ENCODE measurements at regions of chr2 and their contacts with region 1.

Region 1: GRCh38 chr2:54522624-54523281 is 66.6 kb downstream of the SPTBN1 start:
- DNase-seq: peak in 1 of 2 donors; percentile 26
- ATAC-seq: peak; percentile 63 to 67
- H3K4me3 ChIP-seq: no peak overlapping the region
- H3K27ac ChIP-seq: peak overlapping the region in 2 of 4 donors; percentile 67 to 73
- H3K4me1 ChIP-seq: peaks cover 20 to 63% of the 10 kb centered on the region in 2 donors
- H3K27me3 ChIP-seq: no peaks in the 10 kb centered on the region
- CTCF ChIP-seq: peak; percentile 48 to 63 (median 55)
- POLR2A ChIP-seq: no peak

Region 2: DNA sequence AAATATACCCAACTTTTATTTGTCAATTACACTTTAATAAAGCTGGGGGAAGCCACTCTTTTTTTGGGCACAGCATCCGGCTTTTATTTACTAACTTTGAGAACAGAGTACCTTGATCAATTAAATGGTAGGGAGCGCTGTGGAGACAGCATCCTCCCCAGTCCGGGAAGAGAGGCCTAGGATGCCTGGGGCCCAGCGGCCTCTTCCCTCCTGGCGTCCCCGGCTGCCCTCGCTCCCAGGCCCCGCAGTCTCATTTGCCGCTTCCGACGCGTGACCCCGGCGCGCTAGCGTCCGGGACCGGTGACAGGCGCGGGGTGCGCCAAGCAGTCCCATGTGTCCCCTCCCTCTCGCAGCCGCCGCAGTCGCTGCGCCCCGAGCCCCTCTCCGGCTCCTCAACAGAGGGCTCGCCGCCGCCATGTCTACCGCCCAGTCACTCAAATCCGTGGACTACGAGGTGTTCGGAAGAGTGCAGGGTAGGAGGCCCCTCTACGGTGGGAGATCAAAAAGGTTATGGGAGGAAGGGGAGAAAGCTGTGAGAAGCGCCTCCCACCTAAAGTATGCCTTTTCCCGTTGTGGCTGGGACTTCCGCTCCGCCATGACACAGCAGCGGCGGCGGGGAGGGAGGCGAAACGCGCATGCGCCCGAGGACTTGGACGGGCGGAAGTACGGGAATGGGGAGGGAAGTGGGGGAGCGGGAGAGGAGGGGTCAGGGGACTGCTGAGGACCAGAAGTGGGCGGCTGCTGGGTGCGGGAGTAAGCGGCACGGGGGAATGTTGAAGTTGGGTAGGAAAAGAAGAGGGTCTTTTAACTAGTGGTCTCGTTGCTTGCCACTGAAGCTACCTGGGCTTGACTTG is 407.2 kb before region 1 on chr2 and contains the start of gene ACYP2:
- in situ Hi-C with region 1: loop called in 1 of 4 experiments (anchors 25 kb)
- intact Hi-C with region 1: no loop called
- DNase-seq: peak; percentile 94 to 95
- ATAC-seq: peak; percentile 96 to 98
- H3K4me3 ChIP-seq: peak within 1 kb of the TSS; percentile 70 to 89 (median 76)
- H3K27ac ChIP-seq: peak within 1 kb of the TSS; percentile 97 to 99 (median 98)
- H3K4me1 ChIP-seq: peaks cover 10 to 16% of the 10 kb centered on the region in 2 donors
- H3K27me3 ChIP-seq: no peaks in the 10 kb centered on the region
- CTCF ChIP-seq: no peak
- POLR2A ChIP-seq: peak; percentile 83 to 85
- total RNA-seq, gene ACYP2: 52.9 to 121 (median 107) TPM

Region 3: DNA sequence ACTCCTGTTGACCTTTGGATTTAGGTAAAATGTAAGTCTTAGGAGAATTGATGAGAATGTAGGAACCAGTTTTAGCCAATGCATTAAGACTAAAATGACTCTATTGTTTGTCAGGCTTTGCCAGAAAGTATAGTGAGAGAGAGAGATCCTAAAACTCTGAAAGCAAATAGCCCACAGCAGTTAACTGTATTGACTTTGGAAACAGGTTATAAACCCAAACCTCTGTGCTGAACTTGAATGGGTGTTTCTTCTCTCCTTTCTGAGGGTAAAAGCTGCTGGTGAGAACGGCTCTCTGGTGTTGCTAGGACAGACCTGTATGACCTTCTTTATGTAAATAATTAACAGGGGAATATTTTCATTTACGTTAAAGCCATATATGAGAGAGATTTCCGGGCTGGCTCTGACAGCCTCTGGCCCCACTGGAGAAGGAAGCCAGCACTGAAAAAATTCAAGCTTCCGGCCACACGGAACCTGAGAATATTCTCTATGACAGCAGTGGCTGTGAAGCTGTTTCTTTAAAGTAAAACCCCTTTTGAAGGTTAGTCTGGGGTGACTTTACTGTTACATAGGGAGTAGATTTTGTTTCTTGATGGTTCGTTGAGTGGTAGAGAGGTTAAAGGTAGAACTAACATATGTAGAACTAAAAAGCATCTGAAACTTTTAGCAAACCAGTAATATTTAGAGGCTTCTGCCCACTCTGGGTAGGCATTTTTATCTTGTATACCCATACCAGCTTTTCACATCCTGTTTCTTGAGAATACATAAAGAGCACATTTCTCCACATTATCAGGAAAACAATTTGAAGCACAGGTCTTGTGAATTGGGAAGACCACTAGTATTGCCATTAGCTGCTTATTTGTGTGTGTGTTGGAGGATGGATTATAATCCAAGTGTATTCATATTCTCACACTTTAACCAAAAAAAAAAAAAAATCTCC is 57.2 kb after region 1 on chr2:
- in situ Hi-C with region 1: no loop called
- intact Hi-C with region 1: loop called (anchors 2 kb)
- DNase-seq: no peak
- ATAC-seq: no peak
- H3K4me3 ChIP-seq: no peak overlapping the region
- H3K27ac ChIP-seq: peak overlapping the region in 3 of 4 donors; percentile 12 to 41 (median 24)
- H3K4me1 ChIP-seq: peaks cover 33 to 81% of the 10 kb centered on the region in 2 donors
- H3K27me3 ChIP-seq: no peaks in the 10 kb centered on the region
- CTCF ChIP-seq: no peak
- POLR2A ChIP-seq: no peak

Region 4: DNA sequence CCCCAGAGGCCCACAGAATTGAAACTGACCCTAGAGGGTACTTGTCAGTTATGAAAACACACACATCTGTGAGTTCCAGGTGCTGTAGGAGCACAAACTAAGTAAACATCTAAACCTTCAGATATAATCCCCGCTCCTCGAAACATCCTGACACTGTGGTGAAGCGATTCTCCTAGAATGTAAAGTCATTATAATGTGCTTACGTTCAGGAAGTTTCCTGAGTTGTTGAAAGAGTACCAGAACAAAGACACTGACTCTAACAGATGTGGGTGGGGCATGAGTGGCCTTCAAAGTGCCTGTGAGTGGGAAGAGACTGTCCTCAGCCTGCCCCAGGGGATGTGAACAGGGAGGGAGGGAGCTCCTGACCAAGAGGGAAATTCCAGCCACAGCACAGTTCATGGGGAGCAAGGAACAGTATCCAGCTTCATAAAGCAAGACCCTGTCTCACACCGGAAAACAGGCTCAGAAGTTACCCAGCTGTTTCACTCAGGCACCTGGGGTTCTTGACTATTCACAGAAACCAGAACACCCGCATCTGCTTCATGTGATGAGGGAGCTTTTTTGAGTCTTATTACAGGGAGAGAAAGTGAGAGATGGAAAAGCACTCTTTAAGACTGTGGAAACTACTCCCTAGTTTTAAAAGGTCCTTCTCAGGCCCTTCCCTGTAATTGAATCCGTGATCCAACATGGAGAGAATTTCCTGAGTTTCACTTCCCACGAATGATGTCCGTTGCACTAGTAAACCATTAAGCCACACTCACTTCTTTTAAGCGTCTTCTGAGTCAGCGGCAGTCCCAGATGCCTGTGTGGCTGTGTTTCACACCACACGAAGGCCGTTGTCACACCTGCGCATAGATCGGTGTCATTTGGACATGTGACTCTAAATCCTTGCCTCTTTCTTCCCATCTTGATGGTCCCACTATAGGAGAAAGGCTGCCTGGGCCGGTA is 112.1 kb after region 1 on chr2:
- in situ Hi-C with region 1: no loop called
- intact Hi-C with region 1: loop called (anchors 10 kb)
- DNase-seq: peak; percentile 52 to 70
- ATAC-seq: peak; percentile 68 to 69
- H3K4me3 ChIP-seq: peak overlapping the region in 1 of 4 donors; percentile 6
- H3K27ac ChIP-seq: peak overlapping the region; percentile 77 to 82 (median 80)
- H3K4me1 ChIP-seq: peaks cover 35 to 61% of the 10 kb centered on the region in 2 donors
- H3K27me3 ChIP-seq: no peaks in the 10 kb centered on the region
- CTCF ChIP-seq: no peak
- POLR2A ChIP-seq: peak; percentile 13 to 55

Region 5: GRCh38 chr2:54838585-54839035 is 315.9 kb after region 1 on chr2:
- in situ Hi-C with region 1: loop called in 1 of 4 experiments (anchors 25 kb)
- intact Hi-C with region 1: no loop called
- DNase-seq: peak; percentile 15 to 41
- ATAC-seq: peak; percentile 66 to 90
- H3K4me3 ChIP-seq: no peak overlapping the region
- H3K27ac ChIP-seq: no peak overlapping the region
- H3K4me1 ChIP-seq: no peaks in the 10 kb centered on the region
- H3K27me3 ChIP-seq: no peaks in the 10 kb centered on the region
- CTCF ChIP-seq: peak; percentile 64 to 90 (median 79)
- POLR2A ChIP-seq: no peak

Measured in gastrocnemius medialis (tissue), 4 donors.